Activated CD8-positive, alpha-beta T cell treated with anti-CD3 and anti-CD28 coated beads, Interleukin-2, amount 10 ng/mL, durations not matched to agents 7 days and 5 days (primary cell): ENCODE measurements at regions of chr5 and their contacts with region 1.

Region 1: DNA sequence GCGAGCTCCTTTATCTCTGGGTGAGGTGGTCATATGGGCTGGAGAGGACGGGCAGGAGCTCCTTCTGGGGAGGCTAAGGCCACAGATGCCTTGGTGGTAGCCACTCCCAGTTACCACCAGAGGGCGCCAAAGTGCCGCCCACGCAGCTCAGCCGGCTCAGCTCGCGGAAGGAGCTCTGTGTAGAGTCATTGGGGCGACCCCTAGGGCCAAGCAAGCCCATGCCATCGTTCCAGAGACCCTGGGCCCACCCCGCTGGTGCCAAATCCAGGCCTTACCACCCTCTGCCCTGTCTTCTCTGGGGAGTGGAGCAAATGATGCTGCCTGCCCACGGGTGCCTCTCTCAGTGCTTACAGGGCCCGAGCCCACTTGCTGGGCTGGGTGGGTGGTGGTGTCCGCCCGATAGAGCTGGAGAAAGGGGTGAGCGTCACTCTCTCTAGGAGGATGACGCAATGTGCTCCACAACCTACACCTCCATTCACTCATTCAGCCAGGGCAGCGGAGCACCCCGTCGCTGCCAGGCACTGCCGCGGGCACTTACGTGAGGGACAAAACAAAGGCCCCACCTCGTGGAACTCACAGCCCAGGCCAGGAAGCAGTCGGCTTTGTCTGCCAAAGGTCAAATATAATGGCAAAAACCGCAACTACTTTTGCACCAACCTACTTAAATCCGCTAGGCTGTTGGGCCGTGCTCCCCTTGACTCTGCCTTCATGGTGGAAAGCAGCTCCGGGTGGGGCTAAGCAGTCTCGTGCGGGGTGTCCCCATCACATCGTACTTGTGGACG is 13.8 kb downstream of the TSPAN17 start:
- DNase-seq: peak; percentile 85
- ATAC-seq: peak; percentile 84
- H3K4me3 Mint-ChIP-seq: no peak overlapping the region
- H3K27ac Mint-ChIP-seq: no peak overlapping the region
- H3K4me1 Mint-ChIP-seq: peaks cover 31% of the 10 kb centered on the region
- H3K27me3 Mint-ChIP-seq: peaks cover 5% of the 10 kb centered on the region

Region 2: GRCh38 chr5:176573564-176574296 is 87.3 kb before region 1 on chr5:
- CTCF ChIA-PET with region 1: interaction called, 14 read pairs
- POLR2A ChIA-PET with region 1: no interaction called
- DNase-seq: peak; percentile 83
- ATAC-seq: peak; percentile 90
- H3K4me3 Mint-ChIP-seq: no peak overlapping the region
- H3K27ac Mint-ChIP-seq: no peak overlapping the region
- H3K4me1 Mint-ChIP-seq: peaks cover 3% of the 10 kb centered on the region
- H3K27me3 Mint-ChIP-seq: peaks cover 3% of the 10 kb centered on the region

Region 3: DNA sequence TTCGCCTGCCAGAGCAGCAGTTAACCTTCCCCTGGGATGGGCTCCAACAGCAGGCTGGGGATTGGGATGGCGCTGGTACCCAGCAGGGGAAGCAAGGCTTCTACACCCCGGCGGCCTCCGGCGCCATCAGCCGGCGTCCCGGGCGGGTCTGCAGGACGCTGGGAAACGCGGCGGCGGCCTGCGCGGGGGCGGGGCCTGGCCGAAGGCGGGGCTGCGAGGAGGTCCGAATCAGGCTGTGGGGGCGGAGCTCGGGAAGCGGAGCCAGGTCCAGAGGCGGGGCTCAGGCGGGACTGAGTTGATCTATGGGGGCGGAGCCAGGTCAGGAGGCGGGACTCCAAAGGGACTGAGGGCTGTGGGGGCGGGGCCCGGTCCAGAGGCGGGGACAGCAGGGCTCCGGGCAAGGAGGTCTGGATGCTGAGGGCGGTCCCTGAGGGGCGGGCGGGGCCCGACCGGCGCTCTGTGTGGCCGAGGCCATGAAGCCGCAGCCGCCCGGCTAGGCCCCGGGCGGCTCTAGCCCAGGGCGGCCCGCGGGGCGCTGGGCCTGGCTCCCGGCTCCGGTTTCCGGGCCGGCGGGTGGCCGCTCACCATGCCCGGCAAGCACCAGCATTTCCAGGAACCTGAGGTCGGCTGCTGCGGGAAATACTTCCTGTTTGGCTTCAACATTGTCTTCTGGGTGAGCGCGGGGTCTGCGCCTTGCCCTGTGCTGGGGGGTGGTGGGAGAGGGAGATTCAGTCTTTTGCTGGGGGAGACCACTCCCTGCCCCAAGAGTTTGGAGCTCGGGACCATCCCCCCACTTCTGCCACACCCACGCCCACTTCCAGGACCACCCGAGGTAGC is 13.8 kb before region 1 on chr5 and contains the start of gene TSPAN17:
- CTCF ChIA-PET with region 1: interaction called, 96 read pairs
- POLR2A ChIA-PET with region 1: interaction called, 7 read pairs
- DNase-seq: peak; percentile 100
- ATAC-seq: peak; percentile 95
- H3K4me3 Mint-ChIP-seq: peak within 1 kb of the TSS; percentile 87
- H3K27ac Mint-ChIP-seq: peak within 1 kb of the TSS; percentile 92
- H3K4me1 Mint-ChIP-seq: peaks cover 62% of the 10 kb centered on the region
- H3K27me3 Mint-ChIP-seq: no peaks in the 10 kb centered on the region
- total RNA-seq, gene TSPAN17: 41.6 to 47.4 TPM

Region 4: GRCh38 chr5:176744584-176744965 is 83.5 kb after region 1 on chr5:
- CTCF ChIA-PET with region 1: interaction called, 13 read pairs
- POLR2A ChIA-PET with region 1: no interaction called
- DNase-seq: peak; percentile 19
- ATAC-seq: no peak
- H3K4me3 Mint-ChIP-seq: no peak overlapping the region
- H3K27ac Mint-ChIP-seq: no peak overlapping the region
- H3K4me1 Mint-ChIP-seq: peaks cover 9% of the 10 kb centered on the region
- H3K27me3 Mint-ChIP-seq: peaks cover 62% of the 10 kb centered on the region

Region 5: GRCh38 chr5:176954050-176954449 is 293.0 kb after region 1 on chr5:
- CTCF ChIA-PET with region 1: interaction called, 40 read pairs
- POLR2A ChIA-PET with region 1: no interaction called
- DNase-seq: no peak
- ATAC-seq: no peak
- H3K4me3 Mint-ChIP-seq: no peak overlapping the region
- H3K27ac Mint-ChIP-seq: no peak overlapping the region
- H3K4me1 Mint-ChIP-seq: no peaks in the 10 kb centered on the region
- H3K27me3 Mint-ChIP-seq: no peaks in the 10 kb centered on the region

Region 6: GRCh38 chr5:177071666-177072385 is 410.8 kb after region 1 on chr5:
- CTCF ChIA-PET with region 1: interaction called, 16 read pairs
- POLR2A ChIA-PET with region 1: no interaction called
- DNase-seq: peak; percentile 84
- ATAC-seq: peak; percentile 84
- H3K4me3 Mint-ChIP-seq: no peak overlapping the region
- H3K27ac Mint-ChIP-seq: no peak overlapping the region
- H3K4me1 Mint-ChIP-seq: peaks cover 11% of the 10 kb centered on the region
- H3K27me3 Mint-ChIP-seq: no peaks in the 10 kb centered on the region

Region 7: GRCh38 chr5:177094224-177095087 is 433.4 kb after region 1 on chr5:
- CTCF ChIA-PET with region 1: no interaction called
- POLR2A ChIA-PET with region 1: no interaction called
- DNase-seq: no peak
- ATAC-seq: no peak
- H3K4me3 Mint-ChIP-seq: no peak overlapping the region
- H3K27ac Mint-ChIP-seq: no peak overlapping the region
- H3K4me1 Mint-ChIP-seq: no peaks in the 10 kb centered on the region
- H3K27me3 Mint-ChIP-seq: peaks cover 5% of the 10 kb centered on the region